CD14-positive monocyte (primary cell): ENCODE measurements at regions of chr6 and their contacts with region 1.

Region 1: DNA sequence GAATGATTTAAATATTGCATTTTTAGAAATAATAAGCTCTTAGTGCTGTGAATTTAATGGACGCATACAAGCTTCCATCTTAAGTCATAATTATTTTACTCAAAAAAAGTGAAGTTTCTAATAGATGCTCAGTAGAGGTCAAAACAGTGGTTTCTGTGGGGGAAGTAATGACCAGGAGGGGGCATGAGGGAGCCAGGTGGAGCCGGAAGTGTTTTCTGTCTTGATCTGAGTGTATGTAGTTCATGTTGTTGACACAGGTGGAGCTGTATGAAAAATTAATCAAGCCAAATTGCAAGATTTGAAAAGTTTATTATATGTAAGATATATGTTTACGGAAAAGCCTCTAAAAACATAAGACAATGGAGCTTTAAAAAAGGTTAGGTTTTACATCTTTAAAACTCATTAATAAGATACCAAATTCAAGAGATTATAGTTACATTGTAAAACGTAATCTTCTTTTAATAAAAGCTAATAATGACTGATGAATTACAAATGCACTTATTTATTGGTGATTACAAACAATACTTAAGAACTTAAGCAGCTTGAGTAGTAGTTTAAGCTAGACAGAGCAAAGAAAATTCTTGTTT is 68.0 kb downstream of the PLAGL1 start:
- DNase-seq: peak; percentile 36 to 52 (median 42)
- H3K4me3 ChIP-seq: no peak overlapping the region
- H3K4me3 Mint-ChIP-seq: no peak overlapping the region
- H3K27ac ChIP-seq: no peak overlapping the region
- H3K27ac Mint-ChIP-seq: peak overlapping the region in 1 of 7 donors; percentile 76
- H3K4me1 ChIP-seq: peaks cover 29 to 30% of the 10 kb centered on the region in 2 donors
- H3K4me1 Mint-ChIP-seq: peaks cover 36% of the 10 kb centered on the region
- H3K27me3 ChIP-seq: no peaks in the 10 kb centered on the region
- H3K27me3 Mint-ChIP-seq: peaks cover 0 to 5% (median 2%) of the 10 kb centered on the region in 3 donors
- CTCF ChIP-seq: peak; percentile 87

Region 2: DNA sequence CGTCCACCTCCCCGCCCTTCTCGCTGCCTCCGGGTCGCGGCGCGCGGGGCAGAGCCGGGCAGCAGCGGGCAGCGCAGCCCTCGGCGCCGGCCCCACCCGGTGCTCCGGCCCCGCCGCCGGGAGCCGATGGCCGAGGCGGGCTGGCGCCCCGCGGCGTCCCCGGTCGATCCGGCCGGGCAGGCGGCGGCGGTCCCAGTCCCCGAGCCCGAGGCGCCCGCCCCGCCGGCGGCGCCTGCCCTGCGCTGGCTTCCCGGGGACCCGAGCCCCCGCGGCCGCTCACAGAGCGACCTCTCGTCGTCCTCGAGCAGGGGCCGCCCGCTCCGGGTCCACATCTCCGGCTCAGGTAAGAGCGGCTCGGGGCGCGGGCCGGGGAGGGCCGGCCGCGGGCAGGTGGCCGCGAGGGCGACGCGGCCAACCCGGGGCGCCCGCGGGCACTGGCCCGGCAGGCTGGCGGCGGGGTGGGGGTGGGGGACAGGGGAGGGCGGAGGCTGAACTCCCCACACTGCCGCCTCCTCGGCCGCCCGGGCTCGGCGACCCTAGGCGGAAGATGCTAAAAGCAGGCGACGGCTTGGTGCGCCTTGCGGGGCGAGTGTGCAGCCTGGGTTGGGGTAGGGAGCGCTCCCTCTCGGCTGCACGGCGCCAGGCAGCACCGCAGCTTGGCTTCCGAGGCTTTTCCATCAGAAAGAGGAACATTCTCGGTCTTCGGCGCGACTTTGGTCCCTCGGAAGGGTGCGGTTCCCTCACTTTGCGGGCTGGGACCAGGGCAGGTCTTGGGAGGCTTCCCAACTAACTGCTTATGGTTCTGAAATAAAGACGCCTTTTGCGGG is 403.0 kb before region 1 on chr6:
- intact Hi-C with region 1: no loop called
- DNase-seq: peak; percentile 69 to 78 (median 74)
- H3K4me3 ChIP-seq: peak overlapping the region; percentile 40 to 75 (median 44)
- H3K4me3 Mint-ChIP-seq: peak overlapping the region; percentile 80
- H3K27ac ChIP-seq: peak overlapping the region; percentile 0 to 12
- H3K27ac Mint-ChIP-seq: peak overlapping the region in 6 of 7 donors; percentile 37 to 78 (median 52)
- H3K4me1 ChIP-seq: peaks cover 20 to 42% of the 10 kb centered on the region in 2 donors
- H3K4me1 Mint-ChIP-seq: peaks cover 34% of the 10 kb centered on the region
- H3K27me3 ChIP-seq: no peaks in the 10 kb centered on the region
- H3K27me3 Mint-ChIP-seq: no peaks in the 10 kb centered on the region
- CTCF ChIP-seq: peak; percentile 49

Region 3: DNA sequence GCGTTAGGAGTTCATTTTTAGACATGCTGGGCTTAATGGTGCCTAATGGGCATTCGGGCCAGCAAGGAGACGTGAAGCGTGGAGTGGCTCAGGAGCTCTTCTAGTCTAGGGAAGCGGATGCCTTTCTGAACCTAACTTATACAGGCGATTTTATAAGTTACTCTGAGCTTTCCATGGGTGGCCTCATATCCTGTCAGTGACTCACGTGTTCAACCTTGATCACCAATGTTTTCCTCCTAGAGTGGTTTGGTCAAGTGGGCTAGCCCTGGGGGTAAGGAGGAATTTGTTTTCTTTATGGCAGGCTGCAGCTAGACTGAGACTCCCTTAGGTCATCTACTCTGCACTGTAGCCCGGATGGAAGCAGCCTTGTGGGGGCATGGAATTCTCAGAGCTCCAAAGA is 15.9 kb after region 1 on chr6:
- intact Hi-C with region 1: no loop called
- DNase-seq: no peak
- H3K4me3 ChIP-seq: no peak overlapping the region
- H3K4me3 Mint-ChIP-seq: no peak overlapping the region
- H3K27ac ChIP-seq: no peak overlapping the region
- H3K27ac Mint-ChIP-seq: no peak overlapping the region
- H3K4me1 ChIP-seq: no peaks in the 10 kb centered on the region
- H3K4me1 Mint-ChIP-seq: no peaks in the 10 kb centered on the region
- H3K27me3 ChIP-seq: no peaks in the 10 kb centered on the region
- H3K27me3 Mint-ChIP-seq: peaks cover 0 to 2% (median 0%) of the 10 kb centered on the region in 3 donors
- CTCF ChIP-seq: no peak

Region 4: GRCh38 chr6:144013486-144013909 is 73.4 kb after region 1 on chr6:
- intact Hi-C with region 1: loop called (anchors 2 to 5 kb)
- DNase-seq: peak; percentile 56 to 82 (median 70)
- H3K4me3 ChIP-seq: no peak overlapping the region
- H3K4me3 Mint-ChIP-seq: no peak overlapping the region
- H3K27ac ChIP-seq: no peak overlapping the region
- H3K27ac Mint-ChIP-seq: no peak overlapping the region
- H3K4me1 ChIP-seq: peaks cover 13 to 18% of the 10 kb centered on the region in 2 donors
- H3K4me1 Mint-ChIP-seq: peaks cover 23% of the 10 kb centered on the region
- H3K27me3 ChIP-seq: no peaks in the 10 kb centered on the region
- H3K27me3 Mint-ChIP-seq: peaks cover 0 to 2% (median 0%) of the 10 kb centered on the region in 3 donors
- CTCF ChIP-seq: peak; percentile 94